ENCODE measurements at regions of chr18 and their contacts with region 1.

Region 1: DNA sequence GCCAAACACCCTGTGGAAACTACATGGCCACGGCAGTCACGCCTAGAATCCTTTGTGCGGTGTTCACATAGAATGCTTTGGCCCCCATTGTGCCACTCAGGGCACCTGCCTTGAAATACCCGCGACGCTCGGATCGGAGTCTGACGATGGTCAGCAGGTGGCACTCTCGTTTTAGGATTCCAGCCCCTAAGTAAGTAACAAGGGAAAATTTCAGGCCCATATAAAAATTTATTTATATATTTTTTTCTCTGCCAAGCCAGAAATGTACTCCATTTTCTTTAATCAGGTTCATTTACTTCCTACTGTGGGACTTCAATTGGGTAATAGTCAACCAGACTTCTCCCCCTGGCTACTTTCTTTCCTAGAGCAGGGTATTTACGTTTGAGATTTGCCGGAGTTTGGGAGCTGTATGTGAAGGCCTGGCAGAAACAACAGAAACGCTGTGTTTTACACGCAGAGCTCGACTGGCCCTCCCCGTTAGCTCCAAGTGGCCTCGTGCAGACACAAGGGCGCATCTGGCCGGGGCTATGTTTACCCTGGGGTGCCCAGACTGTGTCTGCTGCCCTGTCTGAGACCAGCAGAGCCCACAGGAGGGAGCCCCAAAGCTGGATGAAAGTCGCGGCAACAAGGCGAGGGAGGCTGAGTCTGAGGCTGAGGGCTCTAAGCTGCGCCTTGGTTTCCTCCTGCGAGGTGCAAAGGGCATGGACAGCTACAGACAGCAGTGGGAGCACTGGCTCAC is 41.6 kb downstream of the LRRC30 start:
- DNase-seq: peak; percentile 79
- H3K4me3 ChIP-seq: no peak overlapping the region
- H3K27ac ChIP-seq: peak overlapping the region; percentile 72
- H3K4me1 ChIP-seq: peaks cover 18% of the 10 kb centered on the region
- H3K27me3 ChIP-seq: peaks cover 1 to 3% of the 10 kb centered on the region in 2 experiments
- CTCF ChIP-seq: peak; percentile 50 to 62
- POLR2A ChIP-seq: no peak

Region 2: DNA sequence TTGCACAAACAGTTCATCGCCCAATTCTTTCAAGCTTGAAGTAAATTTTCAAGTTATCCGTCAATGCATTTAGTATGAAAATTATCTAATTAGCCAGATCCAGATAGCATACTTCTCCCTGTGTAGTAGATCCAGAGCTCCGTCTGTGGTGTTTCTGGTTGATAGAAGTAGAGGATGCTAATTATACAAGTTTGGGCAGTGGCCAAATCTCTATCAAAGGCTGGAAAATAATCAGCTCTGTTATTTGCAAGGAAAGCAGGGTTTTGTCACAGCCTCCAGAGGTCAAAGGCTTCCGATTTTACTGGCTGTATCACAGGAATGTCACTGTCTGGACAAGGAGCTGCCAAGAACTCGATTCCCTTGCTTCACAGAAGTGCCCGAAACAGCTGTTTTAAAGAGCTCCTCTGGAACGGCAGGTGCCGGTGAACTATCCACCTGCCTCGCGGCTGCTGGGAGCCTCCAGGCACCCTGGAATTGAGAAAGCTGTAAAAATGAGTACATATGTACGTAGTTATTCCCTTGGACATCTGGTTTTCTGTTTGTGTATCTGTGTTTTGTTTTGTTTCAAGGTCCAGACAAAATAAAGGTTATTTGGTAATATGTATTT is 12.9 kb before region 1 on chr18:
- CTCF ChIA-PET with region 1: interaction called, 14 read pairs
- POLR2A ChIA-PET with region 1: no interaction called
- dilution Hi-C with region 1: no loop called
- intact Hi-C with region 1: no loop called
- DNase-seq: peak; percentile 11
- H3K4me3 ChIP-seq: no peak overlapping the region
- H3K27ac ChIP-seq: no peak overlapping the region
- H3K4me1 ChIP-seq: no peaks in the 10 kb centered on the region
- H3K27me3 ChIP-seq: peaks cover 4 to 13% of the 10 kb centered on the region in 2 experiments
- CTCF ChIP-seq: no peak
- POLR2A ChIP-seq: no peak

Region 3: DNA sequence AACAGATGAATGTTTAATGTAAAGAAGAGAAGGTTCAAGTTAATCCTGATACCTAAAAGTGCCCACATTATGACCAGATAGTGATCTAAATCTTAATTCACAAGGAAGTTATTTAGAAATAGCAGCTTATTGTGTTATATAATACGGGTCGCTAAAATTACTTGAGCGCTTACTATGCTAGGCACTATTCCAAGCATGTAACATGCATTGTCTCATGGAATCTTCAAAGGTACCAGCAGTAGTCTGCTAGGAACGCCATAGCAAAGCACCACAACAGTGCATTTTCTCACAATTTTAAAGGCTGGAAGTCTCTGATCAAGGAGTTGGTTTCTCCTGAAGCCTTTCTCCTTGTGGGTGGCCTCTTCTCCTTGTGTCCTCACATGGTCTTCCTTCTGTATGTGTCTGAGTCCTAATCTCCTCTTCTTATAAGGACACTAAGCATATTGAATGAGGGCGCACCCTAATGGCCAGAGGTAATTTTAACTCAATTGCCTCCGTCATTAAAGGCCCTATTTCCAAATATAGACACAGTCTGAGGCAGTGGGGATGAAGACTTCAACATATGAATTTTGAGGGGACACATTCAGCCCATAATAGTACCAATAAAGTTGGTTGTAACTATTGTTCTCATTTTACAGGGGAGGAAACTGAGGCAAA is 76.8 kb after region 1 on chr18:
- CTCF ChIA-PET with region 1: interaction called, 18 read pairs
- POLR2A ChIA-PET with region 1: no interaction called
- dilution Hi-C with region 1: no loop called
- intact Hi-C with region 1: no loop called
- DNase-seq: no peak
- H3K4me3 ChIP-seq: no peak overlapping the region
- H3K27ac ChIP-seq: no peak overlapping the region
- H3K4me1 ChIP-seq: no peaks in the 10 kb centered on the region
- H3K27me3 ChIP-seq: peaks cover 0 to 6% of the 10 kb centered on the region in 2 experiments
- CTCF ChIP-seq: no peak
- POLR2A ChIP-seq: no peak

Region 4: GRCh38 chr18:7452331-7452730 is 179.9 kb after region 1 on chr18:
- CTCF ChIA-PET with region 1: interaction called, 95 read pairs
- POLR2A ChIA-PET with region 1: no interaction called
- dilution Hi-C with region 1: no loop called
- intact Hi-C with region 1: loop called (anchors 1 kb)
- DNase-seq: peak; percentile 32
- H3K4me3 ChIP-seq: no peak overlapping the region
- H3K27ac ChIP-seq: no peak overlapping the region
- H3K4me1 ChIP-seq: no peaks in the 10 kb centered on the region
- H3K27me3 ChIP-seq: peaks cover 2 to 4% of the 10 kb centered on the region in 2 experiments
- CTCF ChIP-seq: peak; percentile 61 to 80
- POLR2A ChIP-seq: no peak

Region 5: DNA sequence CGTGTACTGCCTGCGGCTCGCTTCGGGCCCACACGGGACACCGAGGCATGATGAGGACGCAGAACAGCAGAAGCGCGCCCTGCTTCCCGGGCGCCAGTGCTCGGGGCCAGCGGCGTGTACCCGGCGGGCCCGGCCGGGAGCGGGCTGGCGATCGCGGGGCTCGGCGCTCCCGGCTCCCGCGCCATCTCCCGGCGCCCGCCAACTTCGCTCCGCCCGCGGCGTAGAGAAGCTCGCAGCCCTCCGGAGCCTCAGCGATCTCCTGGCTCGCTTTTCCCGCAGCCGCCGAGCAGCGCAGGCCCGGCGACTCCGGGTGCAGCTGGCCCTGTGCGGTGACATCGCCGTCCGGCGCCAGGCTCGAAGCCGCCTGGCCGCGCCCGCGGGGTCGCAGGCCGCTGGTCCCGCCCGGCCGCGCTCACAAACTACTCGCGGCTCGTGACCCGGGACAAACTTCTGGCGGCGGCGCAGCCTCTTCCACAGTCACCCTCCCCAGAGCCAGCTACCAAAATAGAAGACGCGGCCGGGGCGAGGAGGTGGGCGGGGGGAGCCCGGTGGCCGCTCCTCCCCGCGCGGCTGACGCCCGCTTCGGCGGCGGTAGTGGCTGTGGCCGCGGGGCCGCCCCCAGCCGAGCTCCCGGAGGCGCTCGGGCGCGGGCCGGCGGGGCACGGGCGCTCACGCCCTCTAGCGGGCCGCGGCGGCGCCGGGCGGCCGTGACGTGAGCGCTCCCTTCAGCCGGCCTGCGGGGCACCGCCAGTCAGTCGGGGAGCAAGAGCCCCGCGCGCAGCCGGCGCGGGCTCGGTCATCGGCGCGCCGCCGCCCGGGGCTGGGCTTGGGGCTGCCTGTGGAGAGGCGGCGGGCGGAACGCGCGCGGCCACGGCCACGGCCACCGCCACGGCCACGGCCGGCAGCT is 294.3 kb after region 1 on chr18 and contains the start of gene PTPRM:
- CTCF ChIA-PET with region 1: interaction called, 344 read pairs
- POLR2A ChIA-PET with region 1: interaction called, 24 read pairs
- dilution Hi-C with region 1: no loop called
- intact Hi-C with region 1: loop called (anchors 1 kb)
- DNase-seq: peak; percentile 77
- H3K4me3 ChIP-seq: peak within 1 kb of the TSS; percentile 56 to 93 (median 68)
- H3K27ac ChIP-seq: peak within 1 kb of the TSS; percentile 74
- H3K4me1 ChIP-seq: peaks cover 20% of the 10 kb centered on the region
- H3K27me3 ChIP-seq: no peaks in the 10 kb centered on the region
- CTCF ChIP-seq: peak; percentile 28 to 41
- POLR2A ChIP-seq: peak; percentile 13
- total RNA-seq, gene PTPRM: 34.7 and 43.7 TPM in 2 replicates

Region 6: GRCh38 chr18:7789856-7790552 is 517.5 kb after region 1 on chr18:
- CTCF ChIA-PET with region 1: interaction called, 26 read pairs
- POLR2A ChIA-PET with region 1: no interaction called
- dilution Hi-C with region 1: no loop called
- intact Hi-C with region 1: loop called (anchors 1 kb)
- DNase-seq: peak; percentile 59
- H3K4me3 ChIP-seq: no peak overlapping the region
- H3K27ac ChIP-seq: no peak overlapping the region
- H3K4me1 ChIP-seq: no peaks in the 10 kb centered on the region
- H3K27me3 ChIP-seq: no peaks in the 10 kb centered on the region
- CTCF ChIP-seq: peak; percentile 31 to 43
- POLR2A ChIP-seq: no peak

Region 7: GRCh38 chr18:8478166-8478967 is 1205.9 kb after region 1 on chr18:
- CTCF ChIA-PET with region 1: interaction called, 52 read pairs
- POLR2A ChIA-PET with region 1: no interaction called
- dilution Hi-C with region 1: no loop called
- intact Hi-C with region 1: loop called (anchors 1 kb)
- DNase-seq: peak; percentile 55
- H3K4me3 ChIP-seq: no peak overlapping the region
- H3K27ac ChIP-seq: no peak overlapping the region
- H3K4me1 ChIP-seq: no peaks in the 10 kb centered on the region
- H3K27me3 ChIP-seq: peaks cover 0 to 3% of the 10 kb centered on the region in 2 experiments
- CTCF ChIP-seq: peak; percentile 67 to 92
- POLR2A ChIP-seq: no peak

Measured in endothelial cell of umbilical vein (primary cell).